Left cardiac atrium (tissue), 4 donors: ENCODE measurements at regions of chr20 and their contacts with region 1.

Region 1: DNA sequence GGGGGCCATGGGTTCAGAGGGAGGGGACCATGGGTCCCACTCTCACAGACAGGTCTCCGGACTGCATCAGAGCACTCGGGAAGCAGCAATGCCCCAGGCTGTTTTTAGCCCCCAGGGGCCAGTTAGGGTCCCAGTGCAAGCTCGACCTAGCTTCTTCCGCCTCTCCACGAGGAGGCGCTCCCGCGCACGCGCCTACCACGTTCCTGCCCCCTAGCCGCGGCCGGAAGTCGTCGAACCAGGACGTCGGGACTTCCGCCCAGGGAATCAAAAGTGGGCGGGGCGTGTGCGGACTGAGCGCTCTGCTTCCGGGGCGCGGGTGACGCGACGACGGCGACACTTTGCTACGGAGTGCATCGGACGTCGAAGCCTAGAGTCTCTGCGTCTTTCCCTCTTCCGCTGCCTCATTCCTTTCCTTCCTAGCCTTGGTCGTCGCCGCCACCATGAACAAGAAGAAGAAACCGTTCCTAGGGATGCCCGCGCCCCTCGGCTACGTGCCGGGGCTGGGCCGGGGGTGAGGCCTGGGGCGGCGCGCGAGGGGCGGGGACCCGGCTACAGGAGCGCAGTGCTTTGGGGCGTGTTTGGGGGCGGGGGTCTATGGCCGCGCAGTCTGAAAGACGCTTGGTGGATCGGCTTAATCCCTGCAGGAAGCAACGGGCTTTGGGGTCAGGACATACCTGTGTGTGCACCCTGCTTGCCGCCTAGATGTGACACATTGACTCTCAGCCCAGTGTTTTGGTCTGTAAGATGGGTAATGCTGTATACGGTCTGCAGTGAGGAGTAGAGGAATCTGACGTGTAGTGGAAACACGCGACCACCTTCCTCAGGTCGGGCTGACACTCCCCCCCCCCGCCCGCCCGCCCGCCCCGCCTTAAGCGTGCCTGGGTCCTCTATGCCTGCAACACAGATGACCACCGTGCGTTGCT is at the start of gene PRPF6:
- DNase-seq: peak; percentile 96
- ATAC-seq: peak; percentile 91 to 92
- total RNA-seq, gene PRPF6: 38.8 to 43.9 TPM

Region 2: GRCh38 chr20:64057628-64058498 is 76.8 kb after region 1 on chr20:
- intact Hi-C with region 1: loop called in 1 of 2 experiments (anchors 5 kb)
- DNase-seq: peak; percentile 88
- ATAC-seq: peak; percentile 48 to 54